PC-3 (cell line): ENCODE measurements at regions of chr4 and their contacts with region 1.

Region 1: DNA sequence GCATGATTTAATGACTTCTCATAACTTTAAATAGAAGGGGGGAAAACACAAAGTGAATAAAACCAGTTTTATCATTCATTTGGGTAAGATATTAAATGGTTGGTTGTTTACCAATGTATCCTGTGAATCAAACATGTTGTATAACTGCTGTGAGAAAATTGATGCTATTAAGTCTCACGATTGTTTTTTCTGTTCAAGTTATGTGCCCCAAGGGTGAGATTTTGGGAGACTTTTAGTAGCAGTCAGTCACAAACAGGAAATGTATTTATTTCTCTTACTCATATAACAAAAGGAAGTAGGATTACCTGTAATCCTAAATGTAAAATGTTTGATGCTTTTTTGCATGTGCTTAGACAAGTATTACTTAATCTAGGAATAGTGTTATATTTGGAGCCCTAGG is 39.2 kb downstream of the MTHFD2L start:
- DNase-seq: peak; percentile 60
- ATAC-seq: peak; percentile 91
- H3K4me3 ChIP-seq: no peak overlapping the region
- H3K27ac ChIP-seq: peak overlapping the region; percentile 60
- H3K4me1 ChIP-seq: 0 out of 2 replicates have a peak, but pooled peaks cover 10% of the 10 kb centered on the region
- H3K27me3 ChIP-seq: no peaks in the 10 kb centered on the region
- CTCF ChIP-seq: no peak

Region 2: DNA sequence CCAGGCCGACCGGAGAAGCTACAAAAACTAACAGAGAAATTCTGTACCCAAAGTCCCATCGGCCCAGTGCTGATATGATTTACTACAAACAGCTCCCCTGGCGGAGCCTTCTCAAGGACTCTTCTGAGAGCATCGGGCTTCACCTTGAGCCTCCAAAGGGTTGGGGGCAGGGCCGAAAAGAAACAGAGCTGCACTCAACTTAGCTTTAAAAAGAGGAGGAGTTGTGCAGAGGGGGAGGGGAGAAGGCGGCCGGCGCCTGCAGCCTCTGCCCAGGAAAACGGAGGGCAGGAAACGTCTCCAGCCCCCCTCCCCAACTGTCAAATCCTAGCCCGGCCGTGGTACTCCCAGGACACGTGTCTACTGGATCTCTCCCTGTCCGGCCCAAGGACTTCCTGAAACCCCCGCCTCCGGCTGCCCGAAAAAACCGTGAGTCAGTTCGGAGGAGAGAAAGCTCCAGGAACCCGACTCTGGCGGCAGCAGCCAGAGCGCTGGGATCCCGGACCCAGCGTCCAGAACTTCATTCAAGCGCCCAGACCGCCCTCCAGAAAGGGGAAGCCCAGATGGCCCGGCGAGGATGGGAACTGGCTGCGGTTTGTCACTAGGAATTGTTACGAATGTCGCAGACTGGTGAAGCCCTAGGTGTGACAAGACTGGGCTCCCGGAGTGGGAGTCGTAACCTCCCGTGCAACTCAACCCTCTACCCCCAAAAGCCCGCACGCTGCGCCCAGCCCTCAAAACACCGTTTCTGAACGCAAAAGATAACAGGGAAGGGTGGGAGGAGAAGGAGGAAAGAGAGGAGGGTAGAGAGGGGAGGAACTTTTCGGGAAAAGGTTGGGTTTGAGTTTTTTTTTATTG is 1629.0 kb before region 1 on chr4:
- CTCF ChIA-PET with region 1: no interaction called
- POLR2A ChIA-PET with region 1: no interaction called
- intact Hi-C with region 1: no loop called
- DNase-seq: peak; percentile 96
- ATAC-seq: peak; percentile 76
- H3K4me3 ChIP-seq: peak overlapping the region; percentile 92
- H3K27ac ChIP-seq: peak overlapping the region; percentile 77
- H3K4me1 ChIP-seq: peaks cover 36% of the 10 kb centered on the region
- H3K27me3 ChIP-seq: no peaks in the 10 kb centered on the region
- CTCF ChIP-seq: peak; percentile 66

Region 3: DNA sequence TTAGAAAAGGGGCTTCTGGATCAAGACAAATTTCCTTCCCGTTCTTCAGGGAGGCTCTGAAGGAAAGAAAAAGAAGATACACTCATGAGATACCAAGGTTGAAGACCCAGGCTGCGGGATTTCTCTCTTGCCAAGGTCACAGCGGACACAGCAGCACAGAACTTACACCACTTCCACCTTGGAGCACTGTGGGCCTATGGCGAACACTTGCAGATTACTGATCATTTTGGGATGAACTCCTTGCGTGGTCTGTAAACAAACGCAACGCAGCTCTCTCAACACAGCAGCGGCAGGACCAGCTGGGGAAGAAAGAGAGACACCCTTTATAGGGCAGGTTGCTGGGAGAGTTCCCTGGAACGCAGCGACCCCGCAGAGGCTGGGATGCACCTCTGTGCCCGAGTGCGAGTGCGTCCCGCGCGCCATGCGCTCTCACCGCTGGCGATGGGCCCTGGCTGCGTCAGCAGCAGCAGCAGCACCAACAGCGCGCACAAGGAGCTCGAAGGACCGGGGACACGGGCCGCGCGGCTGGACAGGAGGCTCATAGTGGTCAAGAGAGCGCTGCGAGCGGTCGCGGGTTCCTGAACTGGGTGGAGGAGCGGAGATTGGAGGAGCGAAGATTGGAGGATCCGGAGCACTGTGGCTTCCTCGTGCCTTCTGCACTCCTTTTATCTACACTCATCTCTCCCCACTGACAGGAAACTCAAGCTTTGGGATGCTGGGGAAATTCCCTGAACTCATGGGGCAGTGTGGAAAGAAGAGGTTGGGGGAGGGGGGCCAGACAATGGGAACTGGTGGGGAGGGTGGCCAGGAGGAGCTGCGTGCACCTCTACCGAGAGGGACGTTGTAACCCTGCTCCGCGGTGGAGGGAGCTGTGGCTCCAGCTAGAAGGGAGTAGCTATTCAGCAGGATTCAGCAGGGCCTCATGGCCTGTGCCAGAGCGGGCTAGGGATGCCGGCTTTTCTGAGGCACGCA is 198.8 kb before region 1 on chr4 and contains the start of gene CXCL5:
- CTCF ChIA-PET with region 1: no interaction called
- POLR2A ChIA-PET with region 1: interaction called, 10 read pairs
- intact Hi-C with region 1: no loop called
- DNase-seq: peak; percentile 35
- ATAC-seq: peak; percentile 86
- H3K4me3 ChIP-seq: peak within 1 kb of the TSS; percentile 62
- H3K27ac ChIP-seq: no peak within 1 kb of the TSS
- H3K4me1 ChIP-seq: peaks cover 10% of the 10 kb centered on the region; the same call in 1 of the 2 replicates
- H3K27me3 ChIP-seq: no peaks in the 10 kb centered on the region
- CTCF ChIP-seq: no peak
- total RNA-seq, gene CXCL5: 0.55 and 1.0 TPM in 2 replicates